ENCODE measurements at regions of chr16 and their contacts with region 1.

Region 1: GRCh38 chr16:55465077-55465896 is 13.7 kb upstream of the MMP2 start:
- DNase-seq: peak; percentile 69 to 98 (median 90)
- ATAC-seq: peak; percentile 97 to 100 (median 97)
- H3K4me3 ChIP-seq: no peak overlapping the region
- H3K27ac ChIP-seq: no peak overlapping the region
- H3K4me1 ChIP-seq: no peaks in the 10 kb centered on the region
- H3K27me3 ChIP-seq: no peaks in the 10 kb centered on the region
- CTCF ChIP-seq: peak; percentile 99 to 100 (median 99)

Region 2: DNA sequence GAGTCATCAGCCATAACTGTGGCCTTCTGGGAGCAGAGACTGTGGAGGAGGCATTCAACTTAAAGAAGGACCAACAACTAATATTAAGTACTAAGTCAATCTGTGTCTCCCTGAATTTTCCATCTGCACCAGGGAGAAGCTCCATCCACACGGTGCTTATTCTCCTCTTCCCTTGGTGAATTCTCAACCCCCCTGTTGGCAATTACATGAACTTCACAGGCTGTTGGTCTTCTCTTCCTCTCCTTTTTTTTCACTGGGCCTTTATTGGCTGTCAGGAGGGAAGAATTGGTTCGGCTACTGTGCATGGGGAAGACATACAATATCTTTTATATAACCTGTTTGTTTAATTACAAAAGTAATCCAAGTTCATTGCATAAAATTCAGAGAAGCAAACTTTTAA is 294.0 kb before region 1 on chr16:
- intact Hi-C with region 1: no loop called
- DNase-seq: no peak
- ATAC-seq: no peak
- H3K4me3 ChIP-seq: no peak overlapping the region
- H3K27ac ChIP-seq: no peak overlapping the region
- H3K4me1 ChIP-seq: no peaks in the 10 kb centered on the region
- H3K27me3 ChIP-seq: no peaks in the 10 kb centered on the region
- CTCF ChIP-seq: no peak

Region 3: DNA sequence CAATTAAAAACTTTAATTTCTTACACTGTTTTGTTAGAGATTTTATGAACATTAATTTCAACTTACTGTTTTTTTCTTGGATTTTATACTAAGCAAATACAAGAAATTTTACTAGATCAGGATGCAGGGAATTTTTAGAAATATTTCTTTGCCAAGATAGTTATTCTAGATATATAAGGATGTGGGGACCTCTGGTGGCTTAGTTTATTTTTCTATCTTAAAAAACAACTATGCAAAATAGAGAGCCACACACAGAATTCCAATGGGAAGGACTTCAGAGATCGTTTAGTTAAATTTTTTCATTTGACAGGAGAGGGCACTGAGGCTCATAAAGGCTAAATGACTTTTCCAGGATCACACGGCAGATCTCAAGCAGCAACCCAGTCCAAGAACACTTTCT is 78.2 kb after region 1 on chr16:
- intact Hi-C with region 1: loop called in 2 of 3 experiments (anchors 5 kb)
- DNase-seq: no peak
- ATAC-seq: peak in 3 of 4 donors; percentile 56 to 78 (median 77)
- H3K4me3 ChIP-seq: no peak overlapping the region
- H3K27ac ChIP-seq: no peak overlapping the region
- H3K4me1 ChIP-seq: no peaks in the 10 kb centered on the region
- H3K27me3 ChIP-seq: no peaks in the 10 kb centered on the region
- CTCF ChIP-seq: peak in 1 of 4 donors; percentile 20

Region 4: DNA sequence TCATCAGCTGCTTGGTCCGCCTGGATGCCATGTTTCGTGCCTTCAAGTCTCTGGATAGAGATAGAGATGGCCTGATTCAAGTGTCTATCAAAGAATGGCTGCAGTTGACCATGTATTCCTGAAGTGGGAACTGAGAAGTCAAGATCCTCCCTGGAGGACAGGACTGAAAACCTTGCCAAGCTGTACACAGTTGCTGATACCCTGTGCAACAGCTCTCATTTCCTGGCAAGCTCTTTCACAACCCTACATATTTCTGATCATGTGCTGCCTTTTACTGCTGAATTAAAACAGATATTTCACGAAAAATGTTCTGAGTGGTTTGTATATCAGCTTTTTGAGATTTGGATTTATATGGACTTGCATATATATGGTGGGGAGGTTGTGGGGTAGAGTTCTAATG is 102.1 kb after region 1 on chr16:
- intact Hi-C with region 1: no loop called
- DNase-seq: no peak
- ATAC-seq: peak in 1 of 4 donors; percentile 65
- H3K4me3 ChIP-seq: no peak overlapping the region
- H3K27ac ChIP-seq: no peak overlapping the region
- H3K4me1 ChIP-seq: no peaks in the 10 kb centered on the region
- H3K27me3 ChIP-seq: no peaks in the 10 kb centered on the region
- CTCF ChIP-seq: no peak

Region 5: GRCh38 chr16:55701442-55702319 is 236.4 kb after region 1 on chr16:
- intact Hi-C with region 1: loop called (anchors 5 to 10 kb)
- DNase-seq: peak; percentile 38 to 88 (median 74)
- ATAC-seq: peak in 3 of 4 donors; percentile 70 to 81 (median 75)
- H3K4me3 ChIP-seq: no peak overlapping the region
- H3K27ac ChIP-seq: no peak overlapping the region
- H3K4me1 ChIP-seq: no peaks in the 10 kb centered on the region
- H3K27me3 ChIP-seq: no peaks in the 10 kb centered on the region
- CTCF ChIP-seq: peak; percentile 36 to 60 (median 54)